Mammary epithelial cell (primary cell): ENCODE measurements at regions of chr3 and their contacts with region 1.

Region 1: GRCh38 chr3:54374214-54374855 is 252.0 kb downstream of the CACNA2D3 start:
- DNase-seq: peak; percentile 10
- H3K4me3 ChIP-seq: no peak overlapping the region
- H3K27ac ChIP-seq: no peak overlapping the region
- H3K4me1 ChIP-seq: no peaks in the 10 kb centered on the region
- H3K27me3 ChIP-seq: no peaks in the 10 kb centered on the region
- CTCF ChIP-seq: peak; percentile 44 to 73

Region 2: GRCh38 chr3:54146506-54147239 is 227.7 kb before region 1 on chr3:
- CTCF ChIA-PET with region 1: interaction called, 6 read pairs
- dilution Hi-C with region 1: no loop called
- in situ Hi-C with region 1: no loop called
- intact Hi-C with region 1: loop called (anchors 1 kb)
- DNase-seq: peak; percentile 23
- H3K4me3 ChIP-seq: no peak overlapping the region
- H3K27ac ChIP-seq: no peak overlapping the region
- H3K4me1 ChIP-seq: no peaks in the 10 kb centered on the region
- H3K27me3 ChIP-seq: no peaks in the 10 kb centered on the region
- CTCF ChIP-seq: peak; percentile 32 to 72